ENCODE measurements at regions of chr1 and their contacts with region 1.

Region 1: GRCh38 chr1:18643154-18644012 is 12.7 kb downstream of the PAX7 start:
- DNase-seq: no peak
- ATAC-seq: peak; percentile 34
- H3K4me3 Mint-ChIP-seq: peak overlapping the region; percentile 10
- H3K27ac Mint-ChIP-seq: no peak overlapping the region
- H3K4me1 Mint-ChIP-seq: peaks cover 43% of the 10 kb centered on the region
- H3K27me3 Mint-ChIP-seq: peaks cover 84% of the 10 kb centered on the region

Region 2: DNA sequence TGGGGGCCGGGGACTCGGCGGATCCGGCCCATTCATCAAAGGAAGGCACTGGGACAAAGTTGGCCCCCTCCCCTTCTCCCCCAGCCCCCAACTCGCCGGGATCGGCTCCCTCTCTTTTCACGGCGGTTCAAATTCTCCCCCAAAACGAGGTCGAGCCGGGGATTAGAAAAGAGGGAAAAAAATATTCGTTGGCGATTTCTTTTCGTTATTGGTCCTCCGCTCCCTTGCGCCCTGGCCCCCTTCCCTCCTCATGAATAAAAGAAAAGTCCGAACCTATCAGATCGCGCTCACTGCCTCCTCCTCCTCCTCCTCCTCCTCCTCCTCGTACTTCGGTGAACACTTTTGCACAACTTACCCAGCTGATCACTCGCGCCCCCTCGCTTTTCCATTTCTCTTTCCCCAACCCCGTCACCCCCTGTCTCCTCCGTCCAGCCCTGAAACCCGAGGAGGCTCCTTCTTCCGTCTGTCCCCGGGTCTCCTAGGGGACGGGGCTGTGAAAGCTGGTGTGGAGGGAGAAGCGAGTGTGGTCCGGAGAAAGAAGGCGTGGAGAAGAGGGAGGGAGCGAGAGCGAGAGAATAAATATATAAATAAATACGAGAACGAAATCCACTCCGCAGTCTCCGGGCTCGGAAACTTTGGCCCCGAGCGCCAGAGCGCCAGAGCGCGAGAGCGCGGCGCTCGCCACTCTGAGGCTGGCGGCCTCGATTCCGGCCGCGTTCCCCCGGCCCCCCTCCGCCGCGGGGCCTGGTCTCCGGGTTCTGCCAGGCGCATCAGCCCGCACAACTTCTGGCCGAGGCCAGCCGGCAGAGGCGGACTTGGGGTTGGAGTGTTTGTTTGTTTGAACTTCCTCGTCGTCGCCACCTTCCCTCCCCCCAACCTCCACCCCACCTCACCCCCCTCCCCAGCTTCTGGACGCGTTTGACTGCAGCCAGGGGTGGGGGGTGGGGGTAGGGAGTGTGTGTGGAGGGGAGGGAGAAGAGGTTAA is 12.6 kb before region 1 on chr1 and contains the start of gene PAX7:
- CTCF ChIA-PET with region 1: no interaction called
- POLR2A ChIA-PET with region 1: interaction called, 3 read pairs
- intact Hi-C with region 1: loop called (anchors 1 to 2 kb)
- DNase-seq: no peak
- ATAC-seq: no peak
- H3K4me3 Mint-ChIP-seq: no peak within 1 kb of the TSS
- H3K27ac Mint-ChIP-seq: no peak within 1 kb of the TSS
- H3K4me1 Mint-ChIP-seq: peaks cover 8% of the 10 kb centered on the region
- H3K27me3 Mint-ChIP-seq: peaks cover 74% of the 10 kb centered on the region
- total RNA-seq, gene PAX7: not detected

Measured in activated CD4-positive, alpha-beta T cell treated with anti-CD3 and anti-CD28 coated beads for 36 hours (primary cell).